Activated B cell treated with CpG ODN at 0.5 μM for 24 hours (primary cell): ENCODE measurements at regions of chr6 and their contacts with region 1.

Region 1: DNA sequence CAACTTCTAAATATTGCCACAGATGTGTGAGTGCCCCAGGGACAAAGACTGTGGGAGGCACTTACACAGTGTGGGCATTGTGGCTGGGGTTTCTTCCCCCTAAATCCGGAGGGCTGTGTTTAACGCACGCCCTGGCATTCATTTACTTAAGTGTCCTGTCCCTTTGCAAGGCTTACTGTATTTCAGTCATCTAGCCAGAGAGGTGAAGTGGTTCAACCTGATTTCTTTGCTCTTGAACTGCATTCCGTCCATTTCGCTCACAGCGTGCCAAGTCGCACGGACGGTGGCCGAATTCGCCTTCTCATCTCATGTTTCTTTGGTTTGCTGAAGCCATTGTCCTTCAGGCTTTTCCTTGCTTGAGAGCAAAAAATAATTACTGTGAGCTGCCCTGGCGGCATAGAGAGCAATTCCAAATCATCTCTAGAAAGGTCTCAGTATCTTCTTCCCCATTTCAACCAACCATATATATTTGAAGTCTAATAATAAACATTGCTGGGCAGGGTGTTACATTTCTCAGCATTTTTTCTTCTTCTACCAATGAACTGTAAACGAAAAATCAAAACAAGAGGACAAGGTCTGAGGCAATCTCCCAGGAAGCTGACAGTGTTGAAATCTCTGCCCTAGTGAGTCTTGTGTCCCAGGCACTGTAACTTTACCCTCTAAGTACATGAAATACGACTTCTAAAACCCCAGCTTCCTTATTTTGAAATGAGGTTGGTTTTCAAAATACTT is 16.9 kb downstream of the SYTL3 start:
- DNase-seq: no peak
- ATAC-seq: peak; percentile 57
- H3K4me3 Mint-ChIP-seq: peak overlapping the region; percentile 16
- H3K27ac Mint-ChIP-seq: peak overlapping the region; percentile 70
- H3K4me1 Mint-ChIP-seq: peaks cover 17% of the 10 kb centered on the region
- H3K27me3 Mint-ChIP-seq: peaks cover 9% of the 10 kb centered on the region
- CTCF ChIP-seq: no peak

Region 2: DNA sequence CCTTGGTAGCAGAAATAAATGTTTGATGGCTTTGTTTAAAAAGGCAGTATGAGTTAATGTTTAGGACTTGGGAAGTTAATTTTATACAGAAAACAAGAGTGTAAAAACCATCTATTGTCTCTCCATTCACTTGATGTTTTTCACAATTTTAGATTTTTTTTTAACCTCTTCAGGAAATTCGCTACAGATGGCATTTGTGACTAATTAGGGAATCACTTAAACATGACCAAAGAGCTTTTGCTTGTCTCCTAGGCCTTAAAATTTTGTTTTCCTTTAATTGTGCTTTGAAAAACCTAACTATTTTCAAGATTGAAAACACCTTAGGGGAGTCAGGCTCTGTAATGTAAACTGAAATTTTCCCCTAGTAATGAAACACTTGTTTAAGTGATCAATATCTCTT is 337.3 kb before region 1 on chr6:
- CTCF ChIA-PET with region 1: no interaction called
- POLR2A ChIA-PET with region 1: no interaction called
- intact Hi-C with region 1: no loop called
- DNase-seq: no peak
- ATAC-seq: no peak
- H3K4me3 Mint-ChIP-seq: no peak overlapping the region
- H3K27ac Mint-ChIP-seq: peak overlapping the region; percentile 83
- H3K4me1 Mint-ChIP-seq: peaks cover 69% of the 10 kb centered on the region
- H3K27me3 Mint-ChIP-seq: no peaks in the 10 kb centered on the region
- CTCF ChIP-seq: no peak

Region 3: DNA sequence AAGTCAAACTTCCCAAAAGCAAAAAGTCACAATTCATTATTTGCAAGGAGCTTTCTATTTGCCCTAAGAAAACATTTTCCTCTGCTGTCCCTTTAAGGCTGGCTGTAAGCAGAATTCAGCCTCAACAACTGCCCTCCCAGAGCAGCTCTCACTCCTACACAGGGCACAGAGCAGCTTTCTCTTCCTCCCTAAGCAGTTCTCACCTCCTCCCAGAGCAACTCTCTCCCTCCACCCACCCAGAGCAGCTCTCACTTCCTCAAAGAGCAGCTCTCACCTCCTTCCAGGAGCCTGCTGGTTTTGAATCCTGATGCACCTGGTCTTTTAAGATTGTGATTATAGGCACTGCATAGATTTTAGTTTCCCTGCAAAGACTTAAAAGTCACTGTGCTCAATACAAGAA is 227.5 kb before region 1 on chr6:
- CTCF ChIA-PET with region 1: no interaction called
- POLR2A ChIA-PET with region 1: no interaction called
- intact Hi-C with region 1: no loop called
- DNase-seq: peak; percentile 17
- ATAC-seq: peak; percentile 94
- H3K4me3 Mint-ChIP-seq: no peak overlapping the region
- H3K27ac Mint-ChIP-seq: peak overlapping the region; percentile 35
- H3K4me1 Mint-ChIP-seq: peaks cover 9% of the 10 kb centered on the region
- H3K27me3 Mint-ChIP-seq: no peaks in the 10 kb centered on the region
- CTCF ChIP-seq: no peak

Region 4: DNA sequence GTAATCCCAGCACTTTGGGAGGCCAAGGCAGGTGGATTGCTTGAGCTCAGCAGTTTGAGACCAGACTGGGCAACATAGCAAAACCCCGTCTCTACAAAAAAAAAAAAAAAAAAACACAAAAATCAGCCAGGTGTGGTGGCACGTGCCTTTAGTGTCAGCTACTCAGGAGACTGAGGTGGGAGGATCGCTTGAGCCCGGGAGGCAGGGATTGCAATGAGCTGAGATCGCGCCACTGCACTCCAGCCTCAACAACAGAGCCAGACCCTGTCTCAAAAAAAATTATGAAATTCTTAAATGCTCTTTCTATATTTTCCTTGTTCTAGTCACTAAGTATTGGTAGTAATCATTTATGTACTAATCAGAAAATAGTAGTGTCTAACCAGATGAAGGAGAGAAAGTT is 13.7 kb after region 1 on chr6:
- CTCF ChIA-PET with region 1: interaction called, 3 read pairs
- POLR2A ChIA-PET with region 1: interaction called, 3 read pairs
- intact Hi-C with region 1: loop called (anchors 2 kb)
- DNase-seq: no peak
- ATAC-seq: no peak
- H3K4me3 Mint-ChIP-seq: no peak overlapping the region
- H3K27ac Mint-ChIP-seq: no peak overlapping the region
- H3K4me1 Mint-ChIP-seq: no peaks in the 10 kb centered on the region
- H3K27me3 Mint-ChIP-seq: no peaks in the 10 kb centered on the region
- CTCF ChIP-seq: no peak

Region 5: DNA sequence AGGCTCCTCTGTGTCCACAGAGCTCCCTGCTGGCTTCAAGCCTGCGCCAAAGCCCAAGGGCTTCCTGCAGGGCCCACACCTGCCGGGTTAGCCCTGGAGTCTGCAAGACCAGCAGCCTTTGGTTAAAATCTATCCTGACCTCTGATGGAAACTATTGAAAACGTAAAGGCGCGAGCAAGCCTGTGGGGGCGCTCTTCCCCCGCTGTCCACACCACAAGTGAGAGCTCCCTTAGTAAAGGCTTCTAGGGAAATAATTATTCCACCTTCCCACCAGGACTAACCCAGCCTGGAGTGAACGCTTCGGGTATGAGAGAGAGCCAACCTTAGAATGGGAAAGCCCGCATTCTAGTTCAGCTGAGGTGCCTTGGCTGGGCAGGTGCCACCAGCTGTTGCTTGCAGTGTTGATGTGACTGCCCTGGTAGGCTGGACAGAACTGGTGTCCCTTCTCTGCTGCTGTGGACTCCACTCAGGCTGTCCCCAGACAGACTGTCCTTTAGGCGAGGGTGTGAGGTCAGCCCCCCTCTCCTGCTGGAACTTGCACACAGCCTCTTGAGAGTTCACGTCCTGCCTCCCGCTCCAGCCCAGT is 51.8 kb after region 1 on chr6:
- CTCF ChIA-PET with region 1: no interaction called
- POLR2A ChIA-PET with region 1: no interaction called
- intact Hi-C with region 1: no loop called
- DNase-seq: no peak
- ATAC-seq: no peak
- H3K4me3 Mint-ChIP-seq: no peak overlapping the region
- H3K27ac Mint-ChIP-seq: peak overlapping the region; percentile 97
- H3K4me1 Mint-ChIP-seq: peaks cover 78% of the 10 kb centered on the region
- H3K27me3 Mint-ChIP-seq: no peaks in the 10 kb centered on the region
- CTCF ChIP-seq: no peak